MCF 10A (cell line): ENCODE measurements at regions of chr7 and their contacts with region 1.

Region 1: DNA sequence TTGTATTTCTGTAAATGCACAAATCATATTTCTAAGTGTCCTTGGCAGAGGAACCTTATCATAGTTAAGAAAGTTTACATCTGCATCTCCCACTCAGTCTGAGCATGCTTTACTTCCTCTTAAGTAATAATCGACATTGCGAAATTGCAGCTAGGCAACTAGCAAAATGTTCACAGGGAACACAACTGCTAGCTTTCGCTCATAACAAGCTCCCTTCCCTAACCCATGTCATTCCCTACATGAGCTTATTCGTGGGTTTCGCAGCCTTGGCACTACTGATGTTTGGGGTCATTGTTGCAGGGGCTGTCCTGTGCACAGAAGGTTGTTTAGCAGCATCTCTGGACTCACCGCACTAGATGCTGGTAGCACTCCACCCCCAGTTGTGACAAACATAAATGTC is 71.6 kb downstream of the AHR start:
- DNase-seq: peak; percentile 94
- H3K4me3 Mint-ChIP-seq: peak overlapping the region; percentile 9
- H3K27ac Mint-ChIP-seq: peak overlapping the region; percentile 89
- H3K4me1 Mint-ChIP-seq: peaks cover 27% of the 10 kb centered on the region
- H3K27me3 Mint-ChIP-seq: no peaks in the 10 kb centered on the region
- CTCF ChIP-seq: no peak

Region 2: GRCh38 chr7:15628876-15629275 is 1741.2 kb before region 1 on chr7:
- CTCF ChIA-PET with region 1: no interaction called
- POLR2A ChIA-PET with region 1: no interaction called
- intact Hi-C with region 1: no loop called
- DNase-seq: no peak
- H3K4me3 Mint-ChIP-seq: no peak overlapping the region
- H3K27ac Mint-ChIP-seq: no peak overlapping the region
- H3K4me1 Mint-ChIP-seq: no peaks in the 10 kb centered on the region
- H3K27me3 Mint-ChIP-seq: peaks cover 44% of the 10 kb centered on the region
- CTCF ChIP-seq: no peak

Region 3: GRCh38 chr7:17304926-17305325 is 65.2 kb before region 1 on chr7:
- CTCF ChIA-PET with region 1: interaction called, 11 read pairs
- POLR2A ChIA-PET with region 1: interaction called, 37 read pairs
- intact Hi-C with region 1: loop called (anchors 2 kb)
- DNase-seq: peak; percentile 94
- H3K4me3 Mint-ChIP-seq: peak overlapping the region; percentile 70
- H3K27ac Mint-ChIP-seq: peak overlapping the region; percentile 85
- H3K4me1 Mint-ChIP-seq: peaks cover 23% of the 10 kb centered on the region
- H3K27me3 Mint-ChIP-seq: no peaks in the 10 kb centered on the region
- CTCF ChIP-seq: no peak

Region 4: GRCh38 chr7:17408245-17408903 is 38.3 kb after region 1 on chr7:
- CTCF ChIA-PET with region 1: interaction called, 3 read pairs
- POLR2A ChIA-PET with region 1: interaction called, 29 read pairs
- intact Hi-C with region 1: loop called (anchors 2 kb)
- DNase-seq: peak; percentile 97
- H3K4me3 Mint-ChIP-seq: peak overlapping the region; percentile 48
- H3K27ac Mint-ChIP-seq: peak overlapping the region; percentile 90
- H3K4me1 Mint-ChIP-seq: peaks cover 34% of the 10 kb centered on the region
- H3K27me3 Mint-ChIP-seq: no peaks in the 10 kb centered on the region
- CTCF ChIP-seq: no peak

Region 5: DNA sequence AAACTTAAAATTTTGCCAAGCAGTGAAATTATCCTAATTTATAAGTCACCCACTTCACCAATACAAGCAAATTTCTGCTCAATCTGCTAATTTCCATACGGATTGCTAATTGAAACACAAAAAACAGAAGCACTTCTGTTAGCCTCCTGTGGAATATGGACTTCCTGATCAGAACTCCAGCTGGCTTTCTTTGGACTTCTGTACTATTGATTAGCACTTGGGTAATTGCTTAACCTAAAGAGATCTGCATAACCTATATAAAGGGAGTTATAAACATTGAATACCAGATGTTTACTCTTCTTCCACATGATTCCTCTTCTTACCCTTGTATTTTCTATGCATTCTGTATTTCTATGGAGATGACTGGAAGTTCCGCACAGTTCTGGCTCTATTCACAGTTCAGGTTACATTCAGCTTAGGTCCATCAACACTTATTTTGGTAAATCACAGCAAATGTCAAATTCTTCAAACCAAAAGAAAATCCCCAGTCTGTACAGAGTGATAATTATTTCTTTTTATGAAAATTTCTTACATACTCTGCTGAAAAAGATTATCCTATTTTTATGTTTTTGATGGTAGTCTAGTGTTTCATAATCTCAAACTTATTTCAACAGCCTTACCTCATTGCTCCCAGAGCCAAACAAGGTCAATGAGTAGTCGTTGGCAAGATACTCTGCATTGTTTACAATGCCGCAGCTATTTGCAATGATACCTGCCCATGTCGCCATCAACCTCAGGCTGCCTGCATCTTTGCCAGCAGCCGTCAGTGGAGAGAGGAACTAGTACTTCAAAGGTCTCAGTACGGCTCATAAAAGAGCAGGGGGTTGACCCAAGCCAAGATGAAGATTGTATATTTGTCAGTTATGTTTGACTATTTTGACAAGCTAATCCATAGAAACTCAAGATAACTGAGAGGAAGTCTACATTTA is 154.0 kb after region 1 on chr7:
- CTCF ChIA-PET with region 1: interaction called, 3 read pairs
- POLR2A ChIA-PET with region 1: interaction called, 7 read pairs
- intact Hi-C with region 1: loop called (anchors 2 kb)
- DNase-seq: peak; percentile 96
- H3K4me3 Mint-ChIP-seq: peak overlapping the region; percentile 19
- H3K27ac Mint-ChIP-seq: peak overlapping the region; percentile 83
- H3K4me1 Mint-ChIP-seq: peaks cover 50% of the 10 kb centered on the region
- H3K27me3 Mint-ChIP-seq: no peaks in the 10 kb centered on the region
- CTCF ChIP-seq: no peak

Region 6: GRCh38 chr7:17599733-17600685 is 229.9 kb after region 1 on chr7:
- CTCF ChIA-PET with region 1: interaction called, 3 read pairs
- POLR2A ChIA-PET with region 1: interaction called, 17 read pairs
- intact Hi-C with region 1: loop called (anchors 1 kb)
- DNase-seq: peak; percentile 96
- H3K4me3 Mint-ChIP-seq: peak overlapping the region; percentile 56
- H3K27ac Mint-ChIP-seq: peak overlapping the region; percentile 91
- H3K4me1 Mint-ChIP-seq: peaks cover 29% of the 10 kb centered on the region
- H3K27me3 Mint-ChIP-seq: no peaks in the 10 kb centered on the region
- CTCF ChIP-seq: no peak